Endothelial cell of umbilical vein (primary cell): ENCODE measurements at regions of chr1 and their contacts with region 1.

Region 1: DNA sequence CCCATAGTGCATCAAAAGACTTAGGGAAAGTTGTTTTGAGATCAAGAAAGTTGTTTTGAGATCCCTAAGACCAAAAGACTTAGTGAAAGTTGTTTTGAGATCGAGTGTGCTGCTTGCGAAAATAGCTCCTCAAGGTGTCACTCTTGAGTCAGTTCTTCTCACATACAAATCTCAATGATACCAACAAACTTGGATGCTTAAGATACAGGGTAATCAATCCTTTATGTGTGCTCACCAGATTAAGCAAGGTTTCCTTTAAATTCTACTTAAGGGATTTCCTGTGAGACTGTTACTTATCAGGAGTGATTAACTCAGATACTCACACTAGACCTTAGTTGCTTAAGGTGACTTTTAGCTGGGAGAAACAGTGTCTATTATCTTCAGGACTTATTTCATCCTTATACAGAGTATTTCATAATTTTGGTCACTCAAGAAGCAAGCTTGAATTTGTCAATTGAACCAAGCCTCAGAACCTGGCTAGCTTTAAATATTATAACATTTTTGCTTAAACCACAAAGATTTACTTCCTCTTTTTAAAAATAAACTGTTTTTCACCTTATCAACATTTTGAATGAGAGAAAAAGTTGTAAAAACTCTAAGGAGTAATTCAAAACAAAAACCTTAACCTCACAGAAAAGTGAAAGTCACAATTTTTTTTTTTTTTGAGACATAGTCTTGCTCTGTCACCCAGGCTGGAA is 8.0 kb upstream of the RLF start:
- DNase-seq: peak; percentile 76
- H3K4me3 ChIP-seq: no peak overlapping the region
- H3K27ac ChIP-seq: no peak overlapping the region
- H3K4me1 ChIP-seq: no peaks in the 10 kb centered on the region
- H3K27me3 ChIP-seq: peaks cover 16 to 35% of the 10 kb centered on the region in 2 experiments
- CTCF ChIP-seq: peak; percentile 57 to 70
- POLR2A ChIP-seq: no peak

Region 2: GRCh38 chr1:40183055-40183710 is 30.0 kb after region 1 on chr1:
- CTCF ChIA-PET with region 1: interaction called, 26 read pairs
- POLR2A ChIA-PET with region 1: no interaction called
- dilution Hi-C with region 1: no loop called
- intact Hi-C with region 1: no loop called
- DNase-seq: peak; percentile 54
- H3K4me3 ChIP-seq: no peak overlapping the region
- H3K27ac ChIP-seq: no peak overlapping the region
- H3K4me1 ChIP-seq: peaks cover 4% of the 10 kb centered on the region
- H3K27me3 ChIP-seq: no peaks in the 10 kb centered on the region
- CTCF ChIP-seq: peak in 1 of 2 donors; percentile 31
- POLR2A ChIP-seq: no peak

Region 3: DNA sequence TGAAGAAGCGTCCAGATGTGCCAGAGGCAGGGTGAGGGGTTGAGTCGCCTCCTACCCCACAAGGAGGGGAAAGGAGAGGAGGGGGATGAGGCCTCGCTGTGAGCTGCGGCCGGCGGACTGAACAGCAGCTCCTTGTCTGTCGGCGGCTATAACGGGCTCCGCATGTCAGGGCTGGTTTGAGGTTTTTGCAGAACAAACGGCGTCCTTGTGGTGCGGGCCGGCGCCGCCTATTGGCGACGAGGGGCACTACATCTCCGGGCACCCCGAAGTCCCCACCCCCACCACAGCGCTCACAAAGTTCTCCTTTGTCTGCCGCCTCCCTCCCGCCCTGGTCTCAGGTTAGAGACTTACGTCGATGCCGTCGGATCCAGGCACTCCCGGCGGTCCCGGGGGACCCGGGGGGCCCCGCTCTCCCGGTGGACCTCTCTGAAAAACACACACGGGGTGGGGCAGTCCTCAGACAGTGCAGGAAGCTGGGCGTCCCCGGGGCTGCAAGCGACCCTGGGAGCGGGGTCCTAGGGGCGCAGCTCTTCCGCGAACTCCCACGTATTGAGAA is 162.1 kb after region 1 on chr1:
- CTCF ChIA-PET with region 1: interaction called, 51 read pairs
- POLR2A ChIA-PET with region 1: no interaction called
- dilution Hi-C with region 1: no loop called
- intact Hi-C with region 1: loop called (anchors 2 kb)
- DNase-seq: peak; percentile 86
- H3K4me3 ChIP-seq: peak overlapping the region in 2 of 3 experiments; percentile 18 to 24
- H3K27ac ChIP-seq: no peak overlapping the region
- H3K4me1 ChIP-seq: peaks cover 4% of the 10 kb centered on the region
- H3K27me3 ChIP-seq: peaks cover 23 to 33% of the 10 kb centered on the region in 2 experiments
- CTCF ChIP-seq: peak; percentile 92 to 99
- POLR2A ChIP-seq: no peak

Region 4: DNA sequence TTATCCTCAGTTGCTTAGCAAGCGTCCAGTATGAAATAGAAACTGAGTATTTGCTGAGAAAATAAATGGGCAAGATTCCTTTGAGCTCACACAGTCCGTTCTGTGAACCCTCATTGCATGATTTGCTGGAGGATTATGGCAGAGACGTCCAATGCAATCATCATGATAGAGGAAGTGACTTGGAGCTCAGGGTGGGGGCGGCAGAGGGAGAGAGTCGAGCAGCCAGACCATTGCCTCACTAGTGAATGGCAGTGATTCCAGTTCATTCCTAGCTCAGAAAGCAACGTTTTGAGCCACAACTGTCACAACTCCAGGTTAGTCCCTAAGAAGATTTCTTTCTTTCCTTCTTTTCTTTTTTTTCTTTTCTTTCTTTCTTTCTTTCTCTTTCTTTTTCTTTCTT is 191.4 kb after region 1 on chr1:
- CTCF ChIA-PET with region 1: interaction called, 362 read pairs
- POLR2A ChIA-PET with region 1: no interaction called
- dilution Hi-C with region 1: no loop called
- intact Hi-C with region 1: no loop called
- DNase-seq: no peak
- H3K4me3 ChIP-seq: no peak overlapping the region
- H3K27ac ChIP-seq: no peak overlapping the region
- H3K4me1 ChIP-seq: no peaks in the 10 kb centered on the region
- H3K27me3 ChIP-seq: peaks cover 0 to 3% of the 10 kb centered on the region in 2 experiments
- CTCF ChIP-seq: no peak
- POLR2A ChIP-seq: no peak

Region 5: DNA sequence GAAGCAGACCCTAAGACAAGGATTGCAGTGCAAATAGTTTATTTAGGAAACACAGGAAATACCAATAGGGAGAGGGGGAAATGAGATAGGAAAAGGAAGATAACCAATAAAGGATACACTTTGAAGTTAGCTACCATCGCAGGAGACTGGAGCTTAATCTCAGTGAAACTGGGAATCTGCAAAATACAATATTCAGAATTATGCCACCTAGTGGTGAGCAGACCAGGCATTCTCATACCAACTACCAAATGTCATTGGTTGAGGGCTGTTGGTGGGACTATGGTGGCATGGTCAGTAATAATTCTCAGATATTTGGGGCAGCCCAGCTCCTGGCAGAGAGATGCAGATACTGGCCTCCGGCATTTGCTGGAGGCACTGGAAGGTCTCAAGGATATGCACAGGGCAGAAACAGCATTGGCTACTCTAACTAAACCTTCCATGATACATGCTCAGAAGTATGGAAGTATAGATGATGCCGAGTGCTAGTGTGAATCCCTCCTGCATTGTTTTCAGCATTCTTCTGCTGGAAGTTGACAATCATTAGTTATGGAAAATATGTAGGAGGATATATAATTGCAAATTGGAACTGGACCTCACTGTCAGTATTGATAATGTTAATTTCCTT is 285.3 kb after region 1 on chr1:
- CTCF ChIA-PET with region 1: interaction called, 31 read pairs
- POLR2A ChIA-PET with region 1: no interaction called
- dilution Hi-C with region 1: no loop called
- intact Hi-C with region 1: no loop called
- DNase-seq: peak; percentile 51
- H3K4me3 ChIP-seq: no peak overlapping the region
- H3K27ac ChIP-seq: no peak overlapping the region
- H3K4me1 ChIP-seq: no peaks in the 10 kb centered on the region
- H3K27me3 ChIP-seq: no peaks in the 10 kb centered on the region
- CTCF ChIP-seq: peak; percentile 67 to 82
- POLR2A ChIP-seq: no peak